Natural killer cell (primary cell): ENCODE measurements at regions of chr16 and their contacts with region 1.

Region 1: GRCh38 chr16:57300387-57301125 is 16.1 kb upstream of the PLLP start:
- DNase-seq: peak; percentile 100
- ATAC-seq: peak; percentile 90 to 98 (median 92)
- H3K4me3 ChIP-seq: peak overlapping the region; percentile 67
- H3K4me3 Mint-ChIP-seq: peak overlapping the region; percentile 67
- H3K27ac ChIP-seq: peak overlapping the region; percentile 83
- H3K27ac Mint-ChIP-seq: no peak overlapping the region
- H3K4me1 ChIP-seq: peaks cover 37% of the 10 kb centered on the region
- H3K4me1 Mint-ChIP-seq: peaks cover 0 to 5% of the 10 kb centered on the region in 2 donors
- H3K27me3 ChIP-seq: no peaks in the 10 kb centered on the region
- H3K27me3 Mint-ChIP-seq: no peaks in the 10 kb centered on the region
- CTCF ChIP-seq: peak; percentile 92

Region 2: DNA sequence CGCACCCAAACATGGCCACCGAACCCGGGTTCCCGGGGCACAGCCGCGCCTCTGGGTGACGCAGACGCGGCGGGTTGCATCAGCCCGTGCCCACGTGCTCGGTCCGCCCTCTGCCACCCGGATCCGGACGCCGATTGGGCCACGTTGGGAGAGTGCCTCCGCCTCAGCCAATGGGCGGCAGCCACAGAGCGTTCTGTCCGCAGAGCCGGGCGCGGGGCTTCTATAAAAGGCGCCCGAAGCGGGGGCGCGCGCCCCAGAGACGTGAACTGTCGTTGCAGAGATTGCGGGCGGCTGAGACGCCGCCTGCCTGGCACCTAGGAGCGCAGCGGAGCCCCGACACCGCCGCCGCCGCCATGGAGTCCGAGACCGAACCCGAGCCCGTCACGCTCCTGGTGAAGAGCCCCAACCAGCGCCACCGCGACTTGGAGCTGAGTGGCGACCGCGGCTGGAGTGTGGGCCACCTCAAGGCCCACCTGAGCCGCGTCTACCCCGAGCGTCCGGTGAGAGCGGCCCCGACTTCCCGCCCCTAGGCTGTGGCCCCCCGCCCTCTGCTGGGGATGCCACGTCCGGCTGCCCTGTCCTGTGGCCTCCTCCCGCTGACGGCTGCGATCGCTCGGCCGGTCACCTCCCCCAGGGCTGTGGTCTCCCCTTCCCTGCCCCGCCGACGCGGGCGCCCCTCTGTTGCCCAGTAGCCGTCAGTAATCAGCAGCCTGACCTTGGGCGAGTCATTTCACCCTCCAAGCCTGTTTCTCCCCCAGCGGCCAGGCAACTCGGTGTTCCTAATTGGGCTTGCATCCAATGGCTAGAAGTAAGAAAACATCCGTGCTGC is 368.4 kb before region 1 on chr16 and contains the start of gene HERPUD1:
- intact Hi-C with region 1: loop called (anchors 2 kb)
- DNase-seq: peak; percentile 99
- ATAC-seq: peak; percentile 89 to 96 (median 92)
- H3K4me3 ChIP-seq: peak within 1 kb of the TSS; percentile 89
- H3K4me3 Mint-ChIP-seq: peak within 1 kb of the TSS; percentile 98
- H3K27ac ChIP-seq: peak within 1 kb of the TSS; percentile 90
- H3K27ac Mint-ChIP-seq: peak within 1 kb of the TSS; percentile 97 to 98
- H3K4me1 ChIP-seq: peaks cover 20% of the 10 kb centered on the region
- H3K4me1 Mint-ChIP-seq: peaks cover 35 to 45% of the 10 kb centered on the region in 2 donors
- H3K27me3 ChIP-seq: no peaks in the 10 kb centered on the region
- H3K27me3 Mint-ChIP-seq: no peaks in the 10 kb centered on the region
- CTCF ChIP-seq: no peak
- total RNA-seq, gene HERPUD1: 181 to 266 (median 243) TPM

Region 3: GRCh38 chr16:57244767-57245471 is 55.6 kb before region 1 on chr16 and contains the start of gene ARL2BP:
- intact Hi-C with region 1: loop called (anchors 1 kb)
- DNase-seq: peak; percentile 97
- ATAC-seq: peak; percentile 95 to 98 (median 95)
- H3K4me3 ChIP-seq: peak within 1 kb of the TSS; percentile 49
- H3K4me3 Mint-ChIP-seq: peak within 1 kb of the TSS; percentile 91
- H3K27ac ChIP-seq: peak within 1 kb of the TSS; percentile 78
- H3K27ac Mint-ChIP-seq: peak within 1 kb of the TSS; percentile 96
- H3K4me1 ChIP-seq: peaks cover 8% of the 10 kb centered on the region
- H3K4me1 Mint-ChIP-seq: peaks cover 14 to 21% of the 10 kb centered on the region in 2 donors
- H3K27me3 ChIP-seq: no peaks in the 10 kb centered on the region
- H3K27me3 Mint-ChIP-seq: no peaks in the 10 kb centered on the region
- CTCF ChIP-seq: no peak
- total RNA-seq, gene ARL2BP: 36.5 to 44.4 (median 43.7) TPM

Region 4: DNA sequence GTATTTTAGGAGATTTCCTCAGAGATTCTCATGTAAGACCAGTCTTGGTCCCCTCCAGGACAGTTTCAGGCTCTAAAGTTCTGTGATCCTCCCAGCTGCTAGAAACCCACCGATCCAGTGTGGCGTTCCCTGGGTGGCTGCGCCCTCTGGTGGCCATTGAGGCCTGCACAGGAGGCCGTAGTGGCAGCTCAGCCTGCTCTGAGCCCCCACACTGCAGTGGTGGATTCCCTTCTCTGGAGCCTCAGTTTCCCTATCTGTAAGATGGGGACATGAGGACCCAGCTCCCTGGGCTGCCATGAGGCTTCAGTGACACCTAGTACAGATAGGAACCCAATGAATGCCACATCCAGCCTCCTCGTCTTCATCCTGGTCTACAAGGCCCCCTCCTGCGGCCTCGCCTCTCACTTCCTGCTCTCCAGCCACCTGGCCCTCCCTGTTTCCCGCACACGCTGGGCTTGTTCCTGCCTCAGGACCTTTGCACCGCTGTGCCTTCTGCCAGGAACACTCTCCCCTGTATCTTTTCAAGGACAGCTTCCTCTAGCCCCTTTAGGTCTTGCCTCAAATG is 219.3 kb after region 1 on chr16:
- intact Hi-C with region 1: loop called (anchors 1 kb)
- DNase-seq: peak; percentile 79 to 89
- ATAC-seq: peak; percentile 79 to 99 (median 95)
- H3K4me3 ChIP-seq: no peak overlapping the region
- H3K4me3 Mint-ChIP-seq: no peak overlapping the region
- H3K27ac ChIP-seq: no peak overlapping the region
- H3K27ac Mint-ChIP-seq: peak overlapping the region in 1 of 2 donors; percentile 57
- H3K4me1 ChIP-seq: peaks cover 18% of the 10 kb centered on the region
- H3K4me1 Mint-ChIP-seq: peaks cover 21 to 25% of the 10 kb centered on the region in 2 donors
- H3K27me3 ChIP-seq: no peaks in the 10 kb centered on the region
- H3K27me3 Mint-ChIP-seq: no peaks in the 10 kb centered on the region
- CTCF ChIP-seq: peak; percentile 94

Region 5: DNA sequence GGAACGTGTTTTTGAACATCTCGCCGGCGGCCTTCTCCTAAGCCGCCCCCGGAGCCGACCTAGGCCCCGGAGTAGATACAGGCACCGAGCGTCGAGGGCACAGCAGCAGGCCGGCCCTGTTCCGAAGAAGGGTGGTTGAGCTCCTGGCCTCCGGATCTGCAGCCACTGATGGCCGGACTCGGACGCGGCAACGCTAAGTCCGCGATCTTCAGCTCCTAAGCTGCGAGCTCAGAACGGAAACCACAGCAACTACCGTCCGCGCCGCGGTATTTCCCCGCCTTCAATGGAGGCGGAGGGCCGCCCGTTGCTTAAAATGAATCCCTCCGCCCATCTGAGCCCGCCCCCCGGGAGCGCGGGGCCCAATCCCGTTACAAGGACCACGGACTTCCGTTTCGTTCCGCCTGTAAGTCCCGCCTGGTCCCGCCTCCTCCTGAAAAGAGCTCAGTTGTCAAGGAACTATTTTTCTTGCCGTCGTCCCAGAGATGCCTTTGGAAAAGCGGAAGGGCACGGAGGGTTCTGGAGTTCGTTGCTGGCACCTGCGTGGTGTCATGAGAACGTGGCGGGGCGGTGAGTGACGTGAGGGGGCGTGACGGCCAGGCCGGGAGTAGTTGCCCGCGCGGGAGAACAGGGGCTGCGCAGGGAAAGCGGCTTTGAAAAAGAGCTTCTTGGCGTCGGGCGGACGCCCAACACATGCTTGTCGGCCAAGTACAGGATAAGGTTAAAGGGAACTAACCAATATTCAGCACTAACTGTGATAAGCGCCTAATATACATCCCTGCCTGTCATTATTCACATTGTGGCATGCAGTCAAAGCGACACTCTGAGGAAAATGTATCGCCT is 828.8 kb after region 1 on chr16 and contains the start of gene CFAP20:
- intact Hi-C with region 1: loop called (anchors 5 kb)
- DNase-seq: peak; percentile 94 to 98
- ATAC-seq: peak; percentile 86 to 95 (median 94)
- H3K4me3 ChIP-seq: peak within 1 kb of the TSS; percentile 94
- H3K4me3 Mint-ChIP-seq: peak within 1 kb of the TSS; percentile 99
- H3K27ac ChIP-seq: peak within 1 kb of the TSS; percentile 88
- H3K27ac Mint-ChIP-seq: peak within 1 kb of the TSS; percentile 93 to 95
- H3K4me1 ChIP-seq: peaks cover 25% of the 10 kb centered on the region
- H3K4me1 Mint-ChIP-seq: peaks cover 42% of the 10 kb centered on the region in 2 donors
- H3K27me3 ChIP-seq: no peaks in the 10 kb centered on the region
- H3K27me3 Mint-ChIP-seq: no peaks in the 10 kb centered on the region
- CTCF ChIP-seq: no peak
- total RNA-seq, gene CFAP20: 57.9 to 137 (median 64.7) TPM